ENCODE measurements at regions of chr14 and their contacts with region 1.

Region 1: GRCh38 chr14:23469127-23469905 is at the start of gene NGDN:
- DNase-seq: peak; percentile 95
- ATAC-seq: peak; percentile 97
- H3K4me3 Mint-ChIP-seq: no peak within 1 kb of the TSS
- H3K27ac Mint-ChIP-seq: no peak within 1 kb of the TSS
- H3K4me1 Mint-ChIP-seq: peaks cover 11% of the 10 kb centered on the region
- H3K27me3 Mint-ChIP-seq: no peaks in the 10 kb centered on the region
- total RNA-seq, gene NGDN: 53.0 to 57.8 TPM

Region 2: DNA sequence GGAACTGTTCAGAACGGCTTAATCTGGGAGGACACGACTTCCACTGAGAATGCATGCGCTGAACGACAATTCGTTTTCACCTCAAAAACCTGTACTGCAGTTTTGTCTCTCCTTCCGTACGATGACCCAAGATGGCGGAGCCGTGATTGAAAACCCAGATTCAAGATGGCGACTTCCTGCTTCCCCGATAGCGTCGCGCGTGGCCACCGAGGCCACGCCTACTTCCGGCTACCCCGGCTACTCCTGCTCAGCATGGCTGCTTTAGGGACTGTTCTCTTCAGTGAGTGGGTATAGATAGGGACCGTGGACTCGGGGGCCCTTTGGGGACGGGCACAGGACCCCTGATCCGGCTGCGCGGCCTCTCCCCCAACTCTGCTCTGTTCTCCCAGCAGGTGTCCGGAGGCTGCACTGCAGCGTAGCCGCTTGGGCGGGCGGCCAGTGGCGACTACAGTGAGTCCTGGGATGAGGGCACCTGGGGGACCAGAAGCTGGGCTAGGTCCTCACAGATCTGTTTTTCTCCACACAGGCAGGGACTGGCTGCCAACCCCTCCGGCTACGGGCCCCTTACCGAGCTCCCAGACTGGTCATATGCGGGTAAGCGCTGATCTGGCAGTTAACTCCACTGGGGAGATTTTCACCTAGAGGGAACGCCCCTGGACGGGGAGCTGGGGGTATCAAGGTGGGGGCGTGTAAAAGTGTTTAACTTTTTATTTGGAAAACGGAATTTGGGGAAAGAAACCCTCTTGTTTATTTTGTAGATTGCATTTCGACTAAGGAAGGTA is 639.5 kb before region 1 on chr14 and contains the start of gene MRPL52:
- CTCF ChIA-PET with region 1: no interaction called
- POLR2A ChIA-PET with region 1: no interaction called
- intact Hi-C with region 1: loop called in 1 of 2 experiments (anchors 5 kb)
- DNase-seq: peak; percentile 94
- ATAC-seq: peak; percentile 92
- H3K4me3 Mint-ChIP-seq: peak within 1 kb of the TSS; percentile 82
- H3K27ac Mint-ChIP-seq: peak within 1 kb of the TSS; percentile 98
- H3K4me1 Mint-ChIP-seq: peaks cover 26% of the 10 kb centered on the region
- H3K27me3 Mint-ChIP-seq: no peaks in the 10 kb centered on the region
- total RNA-seq, gene MRPL52: 115 to 136 TPM

Region 3: DNA sequence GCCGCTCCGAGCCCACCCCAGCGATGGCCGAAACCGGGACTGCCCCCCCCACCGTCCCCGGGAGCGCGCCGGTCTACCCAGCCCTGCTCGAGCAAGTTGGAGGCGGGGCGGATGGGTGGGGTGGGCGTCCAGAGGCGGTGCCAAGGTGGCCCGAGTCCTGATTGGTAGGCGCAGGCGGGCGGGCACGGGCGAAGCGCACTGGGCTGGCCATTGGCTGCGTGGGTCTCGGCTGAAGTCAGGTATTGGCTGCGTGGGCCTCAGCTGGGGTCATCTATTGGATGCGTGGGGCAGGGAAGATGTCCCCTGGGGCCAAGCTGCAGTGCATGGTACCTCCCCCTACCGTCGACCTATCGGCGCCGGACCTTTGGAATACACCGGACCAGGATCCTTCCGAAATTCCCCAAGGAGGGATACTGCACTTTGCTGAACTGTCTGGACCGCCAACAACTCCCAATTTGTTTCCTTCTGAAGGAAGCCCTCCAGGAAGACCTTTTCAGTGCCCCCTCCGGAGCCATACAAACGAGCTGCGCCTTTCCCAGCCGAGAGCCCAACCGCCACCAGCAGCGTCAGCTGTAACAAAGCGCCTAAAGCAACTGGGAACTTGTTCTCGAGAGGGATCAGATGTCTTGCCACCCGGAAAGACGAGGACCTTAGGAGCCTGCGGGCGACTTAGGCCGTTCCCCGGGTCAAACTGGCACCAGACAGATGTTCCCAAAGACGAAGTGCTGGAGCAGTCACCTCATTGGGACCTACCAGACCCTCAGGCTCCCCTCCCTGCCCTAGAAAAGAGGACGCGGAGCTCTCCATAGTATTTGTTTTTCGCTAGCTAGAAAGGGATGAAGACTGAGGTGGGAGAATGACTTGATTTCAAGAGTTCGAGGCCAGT is 183.1 kb before region 1 on chr14 and contains the start of gene HOMEZ:
- CTCF ChIA-PET with region 1: no interaction called
- POLR2A ChIA-PET with region 1: no interaction called
- intact Hi-C with region 1: loop called (anchors 1 kb)
- DNase-seq: peak; percentile 99
- ATAC-seq: peak; percentile 98
- H3K4me3 Mint-ChIP-seq: peak within 1 kb of the TSS; percentile 99
- H3K27ac Mint-ChIP-seq: peak within 1 kb of the TSS; percentile 95
- H3K4me1 Mint-ChIP-seq: peaks cover 18% of the 10 kb centered on the region
- H3K27me3 Mint-ChIP-seq: no peaks in the 10 kb centered on the region
- total RNA-seq, gene HOMEZ: 13.7 to 17.5 TPM

Region 4: GRCh38 chr14:24141097-24141880 is 672.0 kb after region 1 on chr14 and contains the start of gene EMC9:
- CTCF ChIA-PET with region 1: no interaction called
- POLR2A ChIA-PET with region 1: no interaction called
- intact Hi-C with region 1: loop called in 1 of 2 experiments (anchors 10 kb)
- DNase-seq: peak; percentile 100
- ATAC-seq: peak; percentile 87
- H3K4me3 Mint-ChIP-seq: peak within 1 kb of the TSS; percentile 88
- H3K27ac Mint-ChIP-seq: peak within 1 kb of the TSS; percentile 97
- H3K4me1 Mint-ChIP-seq: peaks cover 66% of the 10 kb centered on the region
- H3K27me3 Mint-ChIP-seq: no peaks in the 10 kb centered on the region
- total RNA-seq, gene EMC9: 36.9 to 46.7 TPM